Right lobe of liver (tissue), 6 donors: ENCODE measurements at regions of chr17 and their contacts with region 1.

Region 1: GRCh38 chr17:77054936-77055335 is 85.8 kb upstream of the SEC14L1 start:
- DNase-seq: no peak
- ATAC-seq: peak in 1 of 4 donors; percentile 6
- H3K4me3 ChIP-seq: no peak overlapping the region
- H3K27ac ChIP-seq: no peak overlapping the region
- H3K4me1 ChIP-seq: no peaks in the 10 kb centered on the region
- H3K27me3 ChIP-seq: no peaks in the 10 kb centered on the region
- CTCF ChIP-seq: no peak
- POLR2A ChIP-seq: no peak

Region 2: GRCh38 chr17:76868176-76868668 is 186.7 kb before region 1 on chr17 and contains the start of gene MGAT5B:
- intact Hi-C with region 1: loop called (anchors 5 kb)
- DNase-seq: peak; percentile 69 to 85 (median 80)
- ATAC-seq: peak; percentile 91 to 98 (median 94)
- H3K4me3 ChIP-seq: peak within 1 kb of the TSS in 1 of 3 donors; percentile 29
- H3K27ac ChIP-seq: no peak within 1 kb of the TSS
- H3K4me1 ChIP-seq: no peaks in the 10 kb centered on the region
- H3K27me3 ChIP-seq: peaks cover 0 to 17% of the 10 kb centered on the region in 2 donors
- CTCF ChIP-seq: peak; percentile 76 to 98 (median 82)
- POLR2A ChIP-seq: no peak
- total RNA-seq, gene MGAT5B: 0.16 TPM in 1 of 6 experiments, not detected in the others

Region 3: DNA sequence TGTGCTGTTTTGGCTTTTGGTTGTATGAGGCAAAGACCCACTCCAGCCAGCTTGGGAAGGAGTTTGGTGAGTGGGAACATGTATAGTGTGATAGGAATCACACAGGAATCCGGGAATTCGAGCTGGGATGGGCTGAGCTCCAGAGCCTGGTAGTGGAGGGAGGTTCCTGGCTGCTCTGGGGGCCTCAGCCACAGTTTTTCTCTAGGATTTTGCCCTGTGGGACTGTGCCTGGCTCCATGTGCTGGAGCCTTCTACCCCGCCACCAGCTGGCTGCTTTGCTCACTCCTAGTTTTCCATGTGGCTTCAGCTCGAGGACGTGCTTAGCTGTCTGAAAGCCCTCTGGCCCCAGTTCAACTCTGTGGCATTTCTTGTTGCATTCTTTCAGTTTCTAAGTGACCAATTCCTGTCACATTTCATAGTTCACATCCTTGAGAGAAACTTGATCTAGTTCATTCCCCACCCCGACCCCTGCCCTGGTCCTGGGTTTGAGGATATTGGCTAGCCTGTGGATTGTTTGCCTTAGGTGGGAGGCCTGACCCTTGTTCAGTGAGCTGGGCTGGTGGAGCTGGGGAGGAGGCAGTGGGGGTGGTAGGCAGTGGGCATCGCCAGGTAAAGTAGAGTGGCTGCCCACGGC is 90.8 kb after region 1 on chr17:
- intact Hi-C with region 1: no loop called
- DNase-seq: peak; percentile 63 to 72 (median 64)
- ATAC-seq: peak; percentile 47 to 62 (median 58)
- H3K4me3 ChIP-seq: peak overlapping the region in 1 of 3 donors; percentile 34
- H3K27ac ChIP-seq: peak overlapping the region; percentile 57 to 79 (median 69)
- H3K4me1 ChIP-seq: peaks cover 0 to 28% (median 2%) of the 10 kb centered on the region in 4 donors
- H3K27me3 ChIP-seq: no peaks in the 10 kb centered on the region
- CTCF ChIP-seq: peak in 2 of 4 donors; percentile 13 to 17
- POLR2A ChIP-seq: no peak